CD4-positive, alpha-beta T cell (primary cell): ENCODE measurements at regions of chr6 and their contacts with region 1.

Region 1: GRCh38 chr6:36350681-36351571 is 14.2 kb upstream of the BNIP5 start:
- DNase-seq: no peak
- ATAC-seq: no peak
- H3K4me3 ChIP-seq: no peak overlapping the region
- H3K4me3 Mint-ChIP-seq: no peak overlapping the region
- H3K27ac ChIP-seq: no peak overlapping the region
- H3K27ac Mint-ChIP-seq: no peak overlapping the region
- H3K4me1 ChIP-seq: no peaks in the 10 kb centered on the region
- H3K4me1 Mint-ChIP-seq: no peaks in the 10 kb centered on the region
- H3K27me3 ChIP-seq: no peaks in the 10 kb centered on the region
- H3K27me3 Mint-ChIP-seq: no peaks in the 10 kb centered on the region
- CTCF ChIP-seq: no peak

Region 2: DNA sequence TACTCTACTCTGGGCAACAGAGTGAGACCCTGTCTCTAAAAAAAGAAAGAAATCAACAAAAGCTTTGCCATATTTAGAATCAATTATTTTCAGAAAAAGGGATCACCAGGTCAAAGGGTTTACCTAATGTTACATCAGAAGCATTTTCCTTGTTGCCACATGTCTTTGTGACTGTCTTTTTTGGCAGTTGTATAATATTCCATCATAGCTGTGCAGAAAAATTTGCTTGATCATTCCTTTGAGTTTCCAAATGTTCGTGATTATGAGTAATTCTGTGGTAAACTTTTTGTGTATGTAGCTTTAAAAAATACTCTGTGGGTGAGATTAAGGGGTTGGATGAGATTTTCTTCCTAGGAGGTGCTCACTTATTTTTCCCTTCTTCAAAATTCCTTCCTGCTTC is 54.7 kb before region 1 on chr6:
- CTCF ChIA-PET with region 1: no interaction called
- POLR2A ChIA-PET with region 1: no interaction called
- intact Hi-C with region 1: no loop called
- DNase-seq: peak in 2 of 14 experiments; percentile 18 to 29
- ATAC-seq: no peak
- H3K4me3 ChIP-seq: no peak overlapping the region
- H3K4me3 Mint-ChIP-seq: no peak overlapping the region
- H3K27ac ChIP-seq: no peak overlapping the region
- H3K27ac Mint-ChIP-seq: no peak overlapping the region
- H3K4me1 ChIP-seq: no peaks in the 10 kb centered on the region
- H3K4me1 Mint-ChIP-seq: no peaks in the 10 kb centered on the region
- H3K27me3 ChIP-seq: no peaks in the 10 kb centered on the region
- H3K27me3 Mint-ChIP-seq: peaks cover 9% of the 10 kb centered on the region
- CTCF ChIP-seq: no peak

Region 3: GRCh38 chr6:36340618-36341454 is 10.1 kb before region 1 on chr6:
- CTCF ChIA-PET with region 1: interaction called, 10 read pairs
- POLR2A ChIA-PET with region 1: no interaction called
- intact Hi-C with region 1: no loop called
- DNase-seq: peak; percentile 46 to 83 (median 66)
- ATAC-seq: peak; percentile 91
- H3K4me3 ChIP-seq: peak overlapping the region; percentile 10
- H3K4me3 Mint-ChIP-seq: peak overlapping the region; percentile 68
- H3K27ac ChIP-seq: no peak overlapping the region
- H3K27ac Mint-ChIP-seq: no peak overlapping the region
- H3K4me1 ChIP-seq: peaks cover 20% of the 10 kb centered on the region
- H3K4me1 Mint-ChIP-seq: peaks cover 10% of the 10 kb centered on the region
- H3K27me3 ChIP-seq: peaks cover 5 to 14% of the 10 kb centered on the region in 2 experiments
- H3K27me3 Mint-ChIP-seq: peaks cover 22% of the 10 kb centered on the region
- CTCF ChIP-seq: peak; percentile 88

Region 4: DNA sequence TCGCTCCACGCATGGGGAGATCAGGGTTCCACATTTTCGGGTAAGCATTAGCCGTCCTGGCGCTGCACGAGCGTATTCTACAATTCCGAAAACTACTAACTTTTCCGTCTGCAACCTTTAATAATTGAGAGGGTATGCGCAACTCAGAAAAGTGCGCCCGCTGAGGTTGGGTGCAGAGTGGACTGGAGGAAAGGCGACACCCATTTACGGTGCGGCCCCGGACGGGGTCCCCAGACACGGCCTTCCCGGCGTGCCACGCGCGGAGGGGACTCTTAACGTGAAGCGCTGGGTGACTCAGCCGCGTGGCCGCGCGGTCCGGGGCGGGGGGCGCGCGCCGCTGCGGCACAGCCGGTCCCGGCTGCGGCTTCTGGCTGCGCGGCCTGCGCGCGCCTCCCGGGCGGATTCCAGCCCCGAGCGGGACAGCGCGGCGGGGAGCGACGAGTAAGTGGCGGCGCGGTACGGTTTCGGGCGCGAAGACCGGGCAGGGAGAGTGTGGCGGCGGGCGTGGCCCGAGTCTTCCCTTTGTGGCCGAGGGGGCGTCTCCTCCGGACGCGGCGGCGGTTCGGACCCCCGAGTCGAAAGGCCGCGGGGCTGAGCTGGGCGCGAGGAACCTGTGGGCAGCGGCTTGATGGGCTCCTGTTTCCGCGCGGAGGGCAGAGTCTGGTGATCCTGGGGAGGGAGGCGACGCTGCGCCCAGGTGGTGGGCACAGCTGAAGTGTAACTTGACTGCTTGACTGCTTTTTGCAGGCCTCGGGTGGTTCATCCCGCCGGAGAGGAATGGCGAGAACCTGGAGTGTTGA is 91.9 kb after region 1 on chr6 and contains the starts of genes KCTD20 and PXT1:
- CTCF ChIA-PET with region 1: no interaction called
- POLR2A ChIA-PET with region 1: no interaction called
- intact Hi-C with region 1: no loop called
- DNase-seq: peak; percentile 69 to 93 (median 80)
- ATAC-seq: peak; percentile 75
- H3K4me3 ChIP-seq: peak within 1 kb of the TSS; percentile 97
- H3K4me3 Mint-ChIP-seq: peak within 1 kb of the TSS; percentile 99
- H3K27ac ChIP-seq: peak within 1 kb of the TSS; percentile 85 to 92
- H3K27ac Mint-ChIP-seq: peak within 1 kb of the TSS; percentile 97
- H3K4me1 ChIP-seq: peaks cover 27% of the 10 kb centered on the region
- H3K4me1 Mint-ChIP-seq: peaks cover 61% of the 10 kb centered on the region
- H3K27me3 ChIP-seq: no peaks in the 10 kb centered on the region
- H3K27me3 Mint-ChIP-seq: no peaks in the 10 kb centered on the region
- CTCF ChIP-seq: no peak
- total RNA-seq, gene KCTD20: 38.4 to 39.5 TPM
- total RNA-seq, gene PXT1: 0.55 to 0.59 TPM